PC-3 (cell line): ENCODE measurements at regions of chr3 and their contacts with region 1.

Region 1: DNA sequence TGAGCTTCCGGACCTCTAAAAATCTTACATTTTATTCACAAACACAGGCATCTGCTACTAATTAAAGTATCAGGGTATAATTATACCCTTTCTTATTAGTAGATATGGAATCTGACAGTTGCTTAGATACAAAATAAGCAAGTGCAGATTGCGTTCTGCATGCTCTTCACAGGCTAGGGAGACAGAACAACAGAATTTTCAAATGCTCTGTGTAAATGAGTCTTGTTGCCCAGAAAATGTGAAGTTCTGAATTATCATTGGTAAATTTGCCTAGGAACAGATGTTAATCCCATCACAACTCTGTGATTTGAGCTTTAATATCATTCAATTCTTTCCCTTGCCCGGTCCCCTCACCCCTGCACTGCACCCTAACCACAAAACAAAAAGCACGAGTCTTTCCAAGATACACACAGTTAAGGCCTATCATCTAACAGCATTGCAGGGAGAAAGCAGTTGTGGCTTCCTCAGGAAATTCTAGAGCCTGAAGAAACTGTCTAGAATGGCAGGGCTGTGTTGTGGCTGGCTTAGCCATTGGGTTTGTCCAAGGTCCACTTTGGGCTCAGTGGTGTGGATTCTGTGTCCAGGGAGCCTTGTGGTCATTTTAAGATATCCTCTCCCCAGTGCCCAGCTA is 119.8 kb downstream of the PDCD6IP start:
- DNase-seq: no peak
- ATAC-seq: no peak
- H3K4me3 ChIP-seq: no peak overlapping the region
- H3K27ac ChIP-seq: no peak overlapping the region
- H3K4me1 ChIP-seq: no peaks in the 10 kb centered on the region
- H3K27me3 ChIP-seq: no peaks in the 10 kb centered on the region
- CTCF ChIP-seq: no peak

Region 2: DNA sequence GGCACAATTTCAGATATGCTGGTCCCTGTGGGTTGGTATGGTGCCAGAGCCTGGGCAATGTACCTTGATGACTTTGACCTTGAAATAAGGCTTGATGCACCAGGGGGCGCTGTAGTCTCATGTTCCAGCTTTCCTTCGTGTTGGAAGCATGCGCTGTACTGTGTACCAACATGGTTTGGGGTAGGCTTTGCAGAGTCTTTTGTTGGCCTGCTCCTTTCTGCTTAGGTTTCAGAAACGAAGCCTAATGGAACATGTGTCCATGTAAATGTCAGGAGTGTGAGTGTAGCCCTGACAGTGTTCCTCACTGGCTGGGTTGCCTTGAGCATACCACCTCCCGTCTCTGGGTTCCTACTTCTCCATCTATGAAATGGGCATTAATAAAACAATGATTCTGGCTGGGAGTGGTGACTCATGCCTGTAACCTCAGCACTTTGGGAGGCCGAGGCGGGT is 970.4 kb before region 1 on chr3:
- CTCF ChIA-PET with region 1: interaction called, 12 read pairs
- POLR2A ChIA-PET with region 1: no interaction called
- intact Hi-C with region 1: no loop called
- DNase-seq: peak; percentile 97
- ATAC-seq: peak; percentile 83
- H3K4me3 ChIP-seq: no peak overlapping the region
- H3K27ac ChIP-seq: no peak overlapping the region
- H3K4me1 ChIP-seq: 0 out of 2 replicates have a peak, but pooled peaks cover 6% of the 10 kb centered on the region
- H3K27me3 ChIP-seq: no peaks in the 10 kb centered on the region
- CTCF ChIP-seq: peak; percentile 94

Region 3: DNA sequence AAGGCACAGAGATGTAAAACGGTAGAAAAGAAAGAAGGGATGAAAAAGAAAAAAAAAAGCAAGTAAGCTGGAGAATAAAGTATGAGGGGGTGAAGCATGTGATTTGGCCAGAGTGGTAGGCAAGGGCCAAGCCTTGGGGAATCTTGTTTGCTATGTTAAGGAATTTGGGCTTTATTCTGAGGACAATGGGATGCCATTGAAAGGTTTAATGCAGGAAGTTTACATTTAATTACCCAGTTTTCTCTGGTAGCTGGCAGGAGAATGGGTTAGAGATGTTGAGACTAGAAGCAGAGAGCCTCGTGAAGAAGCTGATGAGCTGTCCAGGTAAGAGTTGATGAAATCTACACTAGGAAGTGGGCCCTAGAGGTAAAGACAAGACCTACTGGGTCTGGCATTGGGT is 336.0 kb after region 1 on chr3:
- CTCF ChIA-PET with region 1: no interaction called
- POLR2A ChIA-PET with region 1: interaction called, 16 read pairs
- intact Hi-C with region 1: no loop called
- DNase-seq: no peak
- ATAC-seq: no peak
- H3K4me3 ChIP-seq: no peak overlapping the region
- H3K27ac ChIP-seq: no peak overlapping the region
- H3K4me1 ChIP-seq: no peaks in the 10 kb centered on the region
- H3K27me3 ChIP-seq: no peaks in the 10 kb centered on the region
- CTCF ChIP-seq: no peak